Posterior vena cava (tissue), 2 donors: ENCODE measurements at regions of chr2 and their contacts with region 1.

Region 1: DNA sequence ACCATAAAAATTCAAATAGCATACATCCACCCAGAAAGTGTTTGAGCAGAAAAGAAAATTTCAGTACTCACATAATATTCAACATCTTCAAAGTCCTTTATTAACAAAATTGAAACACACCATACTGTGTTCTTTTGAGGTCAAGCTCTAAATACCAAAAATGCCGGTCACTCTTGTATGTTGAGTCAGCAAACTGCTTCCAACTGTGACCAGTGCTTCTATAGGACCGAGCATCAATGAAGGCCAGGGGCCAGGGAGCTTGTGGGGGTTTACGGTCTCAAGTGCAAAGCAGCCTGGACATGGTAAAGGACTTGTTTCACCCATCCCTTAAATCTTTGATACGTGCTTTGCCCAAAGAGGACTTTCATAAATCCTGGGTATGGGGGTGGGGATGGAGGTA is 112.7 kb upstream of the REV1 start:
- DNase-seq: no peak

Region 2: GRCh38 chr2:99364376-99364775 is 238.1 kb before region 1 on chr2:
- intact Hi-C with region 1: loop called in 1 of 2 experiments (anchors 5 kb)
- DNase-seq: no peak